CD4-positive, alpha-beta T cell (primary cell): ENCODE measurements at regions of chr21 and their contacts with region 1.

Region 1: GRCh38 chr21:38733973-38734546 is 71.7 kb upstream of the ETS2 start:
- DNase-seq: peak; percentile 39 to 84 (median 72)
- ATAC-seq: peak; percentile 51
- H3K4me3 ChIP-seq: peak overlapping the region; percentile 53
- H3K4me3 Mint-ChIP-seq: peak overlapping the region; percentile 46
- H3K27ac ChIP-seq: no peak overlapping the region
- H3K27ac Mint-ChIP-seq: no peak overlapping the region
- H3K4me1 ChIP-seq: peaks cover 7% of the 10 kb centered on the region
- H3K4me1 Mint-ChIP-seq: peaks cover 9% of the 10 kb centered on the region
- H3K27me3 ChIP-seq: peaks cover 10 to 13% of the 10 kb centered on the region in 2 experiments
- H3K27me3 Mint-ChIP-seq: peaks cover 36% of the 10 kb centered on the region
- CTCF ChIP-seq: peak; percentile 98

Region 2: DNA sequence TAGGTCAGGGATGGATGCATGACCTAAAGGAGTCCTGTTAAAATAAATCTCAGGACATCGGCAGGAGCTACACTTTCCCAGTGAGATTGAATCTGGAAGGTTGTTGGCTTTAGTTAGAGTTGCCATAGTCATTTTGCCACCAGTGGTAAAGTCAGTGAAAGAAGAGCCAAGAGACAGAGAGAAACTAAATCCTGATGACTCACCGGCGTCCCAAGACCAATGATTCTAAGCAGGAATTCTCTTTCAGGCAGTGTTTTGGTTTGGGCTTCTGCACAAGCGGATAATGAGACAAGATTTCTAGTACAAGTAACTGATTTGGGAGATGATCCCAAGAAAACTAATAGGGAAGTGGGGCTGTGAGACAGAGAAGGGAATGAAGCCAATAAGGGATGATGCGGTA is 17.1 kb before region 1 on chr21:
- CTCF ChIA-PET with region 1: no interaction called
- POLR2A ChIA-PET with region 1: no interaction called
- intact Hi-C with region 1: no loop called
- DNase-seq: no peak
- ATAC-seq: no peak
- H3K4me3 ChIP-seq: no peak overlapping the region
- H3K4me3 Mint-ChIP-seq: no peak overlapping the region
- H3K27ac ChIP-seq: no peak overlapping the region
- H3K27ac Mint-ChIP-seq: no peak overlapping the region
- H3K4me1 ChIP-seq: no peaks in the 10 kb centered on the region
- H3K4me1 Mint-ChIP-seq: no peaks in the 10 kb centered on the region
- H3K27me3 ChIP-seq: no peaks in the 10 kb centered on the region
- H3K27me3 Mint-ChIP-seq: no peaks in the 10 kb centered on the region
- CTCF ChIP-seq: no peak

Region 3: DNA sequence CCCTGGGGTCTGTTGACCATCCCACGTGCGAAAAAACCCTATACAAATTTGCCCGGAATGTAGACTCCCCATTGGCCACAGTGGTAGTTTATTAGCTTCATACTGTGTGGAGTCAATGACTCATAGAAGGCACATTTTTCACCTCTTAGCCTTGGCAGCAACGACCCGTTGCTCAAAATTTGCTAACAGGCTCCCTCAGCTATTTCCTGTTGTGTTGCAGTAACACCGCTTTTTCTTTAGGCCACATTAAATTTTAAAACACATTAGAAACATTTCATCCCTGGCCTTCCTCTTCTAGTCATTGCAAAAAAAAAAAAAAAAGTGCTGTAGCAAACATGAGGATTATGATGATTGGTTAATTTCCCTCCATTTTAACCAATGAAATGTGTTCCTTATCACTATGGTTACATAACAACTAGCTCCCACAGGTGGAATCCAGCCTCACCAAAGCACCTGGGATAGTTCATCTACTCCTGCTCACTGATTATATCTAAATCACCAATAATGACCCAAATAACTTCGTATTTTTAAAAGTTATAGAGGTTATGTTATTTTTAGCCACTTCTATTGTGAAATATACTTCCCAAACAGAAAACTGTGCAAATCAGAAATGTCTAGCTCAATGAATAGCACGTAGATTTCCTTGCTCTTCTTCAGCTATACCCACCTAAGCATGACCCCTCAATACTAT is 21.8 kb after region 1 on chr21:
- CTCF ChIA-PET with region 1: no interaction called
- POLR2A ChIA-PET with region 1: no interaction called
- intact Hi-C with region 1: no loop called
- DNase-seq: peak in 4 of 14 experiments; percentile 22 to 55 (median 36)
- ATAC-seq: peak; percentile 43
- H3K4me3 ChIP-seq: no peak overlapping the region
- H3K4me3 Mint-ChIP-seq: no peak overlapping the region
- H3K27ac ChIP-seq: no peak overlapping the region
- H3K27ac Mint-ChIP-seq: no peak overlapping the region
- H3K4me1 ChIP-seq: peaks cover 7% of the 10 kb centered on the region
- H3K4me1 Mint-ChIP-seq: peaks cover 8% of the 10 kb centered on the region
- H3K27me3 ChIP-seq: no peaks in the 10 kb centered on the region
- H3K27me3 Mint-ChIP-seq: no peaks in the 10 kb centered on the region
- CTCF ChIP-seq: no peak

Region 4: DNA sequence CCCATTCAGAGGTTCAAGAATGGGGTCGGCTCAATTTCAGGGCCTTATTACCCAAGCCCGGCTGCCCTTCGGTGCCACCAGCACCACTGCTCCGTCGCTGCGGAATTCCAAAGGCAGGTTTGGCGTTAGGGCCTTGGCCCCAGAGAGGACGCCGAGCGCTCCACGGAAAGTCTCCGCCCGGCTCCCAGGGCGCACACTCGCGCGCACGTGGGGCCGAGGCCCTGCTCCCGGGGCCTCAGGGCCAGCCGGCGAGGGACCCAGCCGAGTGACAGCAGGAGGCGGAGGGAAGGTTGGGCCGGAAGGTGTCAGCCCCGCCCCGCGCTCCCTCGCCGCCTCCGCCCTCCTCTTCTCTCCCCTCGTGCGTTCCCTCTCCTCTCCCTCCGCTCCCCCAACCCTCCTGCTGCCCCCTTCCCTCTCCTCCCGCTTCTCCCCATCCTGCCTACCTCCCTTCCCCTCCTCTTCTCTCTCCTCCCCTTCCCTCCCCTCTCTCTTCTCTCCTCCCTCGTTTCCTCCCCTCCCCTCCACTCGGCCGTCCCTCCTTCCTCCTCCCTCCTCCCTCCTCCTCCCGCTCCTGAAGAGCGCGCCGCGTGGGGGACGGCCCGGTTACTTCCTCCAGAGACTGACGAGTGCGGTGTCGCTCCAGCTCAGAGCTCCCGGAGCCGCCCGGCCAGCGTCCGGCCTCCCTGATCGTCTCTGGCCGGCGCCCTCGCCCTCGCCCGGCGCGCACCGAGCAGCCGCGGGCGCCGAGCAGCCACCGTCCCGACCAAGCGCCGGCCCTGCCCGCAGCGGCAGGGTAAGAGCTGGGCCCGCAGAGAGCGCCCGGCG is 71.5 kb after region 1 on chr21 and contains the start of gene ETS2:
- CTCF ChIA-PET with region 1: no interaction called
- POLR2A ChIA-PET with region 1: no interaction called
- intact Hi-C with region 1: loop called in 1 of 2 experiments (anchors 2 kb)
- DNase-seq: peak; percentile 37 to 86 (median 64)
- ATAC-seq: peak; percentile 80
- H3K4me3 ChIP-seq: peak within 1 kb of the TSS; percentile 62
- H3K4me3 Mint-ChIP-seq: peak within 1 kb of the TSS; percentile 90
- H3K27ac ChIP-seq: peak within 1 kb of the TSS; percentile 25 to 37
- H3K27ac Mint-ChIP-seq: peak within 1 kb of the TSS; percentile 64
- H3K4me1 ChIP-seq: peaks cover 17% of the 10 kb centered on the region
- H3K4me1 Mint-ChIP-seq: peaks cover 39% of the 10 kb centered on the region
- H3K27me3 ChIP-seq: no peaks in the 10 kb centered on the region
- H3K27me3 Mint-ChIP-seq: no peaks in the 10 kb centered on the region
- CTCF ChIP-seq: peak; percentile 5
- total RNA-seq, gene ETS2: 11.4 to 13.9 TPM

Region 5: GRCh38 chr21:38831526-38832467 is 97.7 kb after region 1 on chr21:
- CTCF ChIA-PET with region 1: no interaction called
- POLR2A ChIA-PET with region 1: no interaction called
- intact Hi-C with region 1: loop called in 1 of 2 experiments (anchors 5 kb)
- DNase-seq: peak in 5 of 14 experiments; percentile 6 to 85 (median 63)
- ATAC-seq: peak; percentile 87
- H3K4me3 ChIP-seq: no peak overlapping the region
- H3K4me3 Mint-ChIP-seq: no peak overlapping the region
- H3K27ac ChIP-seq: peak overlapping the region in 1 of 2 donors; percentile 53
- H3K27ac Mint-ChIP-seq: peak overlapping the region; percentile 3
- H3K4me1 ChIP-seq: peaks cover 13% of the 10 kb centered on the region
- H3K4me1 Mint-ChIP-seq: peaks cover 15% of the 10 kb centered on the region
- H3K27me3 ChIP-seq: no peaks in the 10 kb centered on the region
- H3K27me3 Mint-ChIP-seq: no peaks in the 10 kb centered on the region
- CTCF ChIP-seq: no peak

Region 6: GRCh38 chr21:39137248-39138178 is 403.5 kb after region 1 on chr21:
- CTCF ChIA-PET with region 1: interaction called, 3 read pairs
- POLR2A ChIA-PET with region 1: interaction called, 3 read pairs
- intact Hi-C with region 1: loop called (anchors 1 kb)
- DNase-seq: no peak
- ATAC-seq: no peak
- H3K4me3 ChIP-seq: no peak overlapping the region
- H3K4me3 Mint-ChIP-seq: no peak overlapping the region
- H3K27ac ChIP-seq: no peak overlapping the region
- H3K27ac Mint-ChIP-seq: no peak overlapping the region
- H3K4me1 ChIP-seq: no peaks in the 10 kb centered on the region
- H3K4me1 Mint-ChIP-seq: no peaks in the 10 kb centered on the region
- H3K27me3 ChIP-seq: peaks cover 0 to 2% of the 10 kb centered on the region in 2 experiments
- H3K27me3 Mint-ChIP-seq: peaks cover 4% of the 10 kb centered on the region
- CTCF ChIP-seq: no peak

Region 7: GRCh38 chr21:39175154-39175553 is 441.1 kb after region 1 on chr21:
- CTCF ChIA-PET with region 1: no interaction called
- POLR2A ChIA-PET with region 1: no interaction called
- intact Hi-C with region 1: loop called (anchors 1 kb)
- DNase-seq: peak in 3 of 14 experiments; percentile 15 to 38 (median 35)
- ATAC-seq: no peak
- H3K4me3 ChIP-seq: no peak overlapping the region
- H3K4me3 Mint-ChIP-seq: no peak overlapping the region
- H3K27ac ChIP-seq: no peak overlapping the region
- H3K27ac Mint-ChIP-seq: no peak overlapping the region
- H3K4me1 ChIP-seq: no peaks in the 10 kb centered on the region
- H3K4me1 Mint-ChIP-seq: peaks cover 10% of the 10 kb centered on the region
- H3K27me3 ChIP-seq: no peaks in the 10 kb centered on the region
- H3K27me3 Mint-ChIP-seq: no peaks in the 10 kb centered on the region
- CTCF ChIP-seq: peak; percentile 49